ENCODE measurements at regions of chr6 and their contacts with region 1.

Region 1: GRCh38 chr6:137944793-137945498 is 77.9 kb downstream of the TNFAIP3 start:
- DNase-seq: peak; percentile 49 to 73 (median 67)
- H3K4me3 ChIP-seq: no peak overlapping the region
- H3K27ac ChIP-seq: no peak overlapping the region
- H3K4me1 ChIP-seq: peaks cover 0 to 8% (median 3%) of the 10 kb centered on the region in 4 experiments
- H3K27me3 ChIP-seq: peaks cover 0 to 2% (median 0%) of the 10 kb centered on the region in 5 experiments

Region 2: DNA sequence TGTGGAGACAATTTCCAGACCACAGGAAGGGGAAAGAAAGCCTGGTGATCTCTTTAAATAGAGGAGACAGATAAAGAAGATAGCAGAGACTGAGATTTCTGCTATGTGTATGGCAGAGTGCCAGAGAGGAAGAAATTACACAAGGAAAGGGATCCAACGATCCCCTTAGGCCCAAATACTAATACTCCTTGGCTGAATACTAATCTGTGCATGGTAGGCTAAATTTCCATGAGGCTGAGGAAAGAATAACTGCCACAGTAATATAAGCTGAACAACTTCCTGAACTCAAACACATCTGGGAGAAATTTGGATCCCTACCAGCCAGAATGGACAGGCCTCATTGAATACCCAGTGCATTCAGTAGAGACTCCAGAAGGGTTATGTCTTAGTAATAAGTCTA is 161.2 kb before region 1 on chr6:
- CTCF ChIA-PET with region 1: no interaction called
- POLR2A ChIA-PET with region 1: no interaction called
- DNase-seq: no peak
- H3K4me3 ChIP-seq: no peak overlapping the region
- H3K27ac ChIP-seq: no peak overlapping the region
- H3K4me1 ChIP-seq: peaks cover 0 to 19% (median 8%) of the 10 kb centered on the region in 4 experiments
- H3K27me3 ChIP-seq: no peaks in the 10 kb centered on the region

Region 3: DNA sequence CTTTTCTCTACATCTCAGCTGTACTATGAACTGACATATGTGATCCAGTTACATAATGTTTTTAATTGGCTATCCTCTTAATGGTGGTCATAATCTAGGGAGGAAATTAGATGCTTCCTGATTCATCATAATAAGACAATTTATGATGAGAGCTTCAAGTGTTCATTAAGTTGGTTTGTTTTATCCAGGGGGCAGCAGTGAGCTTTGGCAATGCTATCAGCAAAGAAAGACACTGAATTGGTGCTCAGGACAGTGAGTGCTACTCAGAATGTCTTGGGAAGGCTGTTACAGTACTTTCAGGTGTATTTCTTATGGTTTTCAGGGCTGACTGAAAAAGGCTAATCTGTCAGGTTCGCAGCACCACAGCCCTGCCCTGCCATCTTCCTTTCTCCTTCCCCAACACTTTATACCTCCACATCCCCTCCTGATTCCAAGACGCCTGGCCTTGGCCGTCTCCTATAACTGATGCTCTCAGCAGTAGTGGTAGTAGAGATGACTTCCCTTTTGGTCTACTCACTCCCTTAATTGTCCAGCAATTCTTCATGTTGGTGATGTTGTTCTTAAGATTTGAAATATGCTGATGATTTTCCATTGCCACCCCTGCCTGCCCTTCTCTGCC is 144.9 kb before region 1 on chr6:
- CTCF ChIA-PET with region 1: interaction called, 17 read pairs
- POLR2A ChIA-PET with region 1: no interaction called
- DNase-seq: peak; percentile 82 to 90 (median 88)
- H3K4me3 ChIP-seq: no peak overlapping the region
- H3K27ac ChIP-seq: no peak overlapping the region
- H3K4me1 ChIP-seq: peaks cover 0 to 13% (median 7%) of the 10 kb centered on the region in 4 experiments
- H3K27me3 ChIP-seq: no peaks in the 10 kb centered on the region

Region 4: GRCh38 chr6:137827977-137828810 is 116.8 kb before region 1 on chr6:
- CTCF ChIA-PET with region 1: no interaction called
- POLR2A ChIA-PET with region 1: no interaction called
- DNase-seq: no peak
- H3K4me3 ChIP-seq: no peak overlapping the region
- H3K27ac ChIP-seq: no peak overlapping the region
- H3K4me1 ChIP-seq: peaks cover 10 to 30% (median 20%) of the 10 kb centered on the region in 4 experiments
- H3K27me3 ChIP-seq: no peaks in the 10 kb centered on the region

Region 5: GRCh38 chr6:137927777-137928218 is 17.1 kb before region 1 on chr6:
- CTCF ChIA-PET with region 1: interaction called, 15 read pairs
- POLR2A ChIA-PET with region 1: no interaction called
- DNase-seq: peak; percentile 82 to 97 (median 96)
- H3K4me3 ChIP-seq: peak overlapping the region in 4 of 7 experiments; percentile 6 to 61 (median 46)
- H3K27ac ChIP-seq: peak overlapping the region; percentile 56 to 70
- H3K4me1 ChIP-seq: peaks cover 21 to 47% (median 43%) of the 10 kb centered on the region in 4 experiments
- H3K27me3 ChIP-seq: no peaks in the 10 kb centered on the region

Region 6: GRCh38 chr6:137958811-137959565 is 14.0 kb after region 1 on chr6:
- CTCF ChIA-PET with region 1: interaction called, 22 read pairs
- POLR2A ChIA-PET with region 1: interaction called, 3 read pairs
- DNase-seq: peak in 2 of 3 donors; percentile 28 to 50
- H3K4me3 ChIP-seq: no peak overlapping the region
- H3K27ac ChIP-seq: no peak overlapping the region
- H3K4me1 ChIP-seq: peaks cover 0 to 3% (median 0%) of the 10 kb centered on the region in 4 experiments
- H3K27me3 ChIP-seq: no peaks in the 10 kb centered on the region

Region 7: GRCh38 chr6:137975188-137975940 is 30.4 kb after region 1 on chr6:
- CTCF ChIA-PET with region 1: interaction called, 10 read pairs
- POLR2A ChIA-PET with region 1: no interaction called
- DNase-seq: peak; percentile 32 to 66 (median 59)
- H3K4me3 ChIP-seq: peak overlapping the region in 2 of 7 experiments; percentile 3 to 58
- H3K27ac ChIP-seq: peak overlapping the region in 1 of 2 experiments; percentile 62
- H3K4me1 ChIP-seq: peaks cover 0 to 21% (median 13%) of the 10 kb centered on the region in 4 experiments
- H3K27me3 ChIP-seq: no peaks in the 10 kb centered on the region